Left ventricle myocardium superior (tissue), 1 donor: ENCODE measurements at regions of chr3 and their contacts with region 1.

Region 1: DNA sequence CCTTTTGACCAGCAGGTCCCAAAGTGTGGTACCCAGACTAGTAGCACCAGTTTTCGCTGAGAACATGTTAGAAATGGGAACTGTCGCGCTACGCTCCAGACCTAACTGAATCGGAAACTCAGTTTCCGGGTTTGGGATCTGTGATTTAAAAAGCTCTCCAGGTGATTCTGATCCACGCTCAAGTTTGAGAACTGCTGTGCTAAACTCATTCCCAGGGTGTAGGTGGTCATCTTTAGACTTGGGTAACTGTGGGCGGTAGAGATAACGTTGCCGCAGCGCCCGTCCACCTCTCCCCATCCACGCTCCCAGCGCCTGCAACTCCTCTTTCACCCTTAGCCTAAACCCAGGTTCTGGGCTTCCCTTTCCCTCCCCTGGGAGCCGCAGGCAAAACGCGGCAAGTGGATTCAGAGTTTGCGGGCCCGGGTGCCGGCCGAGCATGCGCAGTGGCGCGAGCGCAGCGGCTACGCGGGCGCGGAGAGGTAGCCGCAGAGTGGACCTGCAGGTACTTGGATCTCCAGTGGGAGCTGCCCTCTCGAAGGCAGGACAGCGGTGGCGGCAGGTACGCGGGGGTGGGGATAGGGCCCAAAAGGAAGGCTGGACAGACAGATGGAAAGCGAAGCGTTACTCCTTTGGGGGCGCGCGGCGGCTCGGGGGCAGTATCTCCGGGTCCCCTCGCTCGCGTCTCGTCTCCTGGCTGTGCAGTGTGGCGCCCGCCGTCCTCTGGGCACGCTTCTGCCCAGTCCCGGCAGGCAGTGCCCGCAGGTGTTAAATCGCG is at the start of gene PLS1:
- DNase-seq: peak; percentile 89
- ATAC-seq: peak; percentile 98
- total RNA-seq, gene PLS1: 1.8 TPM

Region 2: DNA sequence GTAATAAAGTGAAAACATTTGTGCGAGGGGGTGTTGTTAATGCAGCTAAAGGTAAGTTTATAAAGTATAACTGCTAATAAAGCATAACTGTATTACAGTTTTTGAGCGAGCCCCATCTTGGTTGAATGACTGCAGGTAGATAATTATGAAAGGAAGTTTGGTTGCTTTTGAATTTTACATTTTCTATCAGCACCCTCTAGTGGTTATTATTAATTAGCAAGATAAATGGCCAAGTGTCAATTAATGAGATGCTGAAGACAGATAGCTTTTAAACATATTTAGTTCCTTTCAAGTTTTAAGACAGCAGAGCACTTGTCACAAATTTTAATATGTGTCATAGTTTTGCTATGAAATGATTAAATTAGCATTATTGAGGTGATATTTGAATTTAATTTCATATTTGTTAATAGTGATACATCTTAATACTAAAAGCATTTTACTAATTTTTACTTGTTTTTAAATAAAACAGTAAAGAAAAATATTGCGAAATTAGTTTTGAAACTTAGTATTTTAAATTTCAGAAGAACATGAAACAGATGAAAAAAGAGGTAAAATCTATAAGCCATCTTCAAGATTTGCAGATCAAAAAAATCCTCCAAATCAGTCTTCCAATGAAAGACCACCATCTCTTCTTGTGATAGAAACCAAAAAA is 420.3 kb after region 1 on chr3:
- intact Hi-C with region 1: loop called (anchors 10 kb)
- DNase-seq: no peak
- ATAC-seq: no peak